ENCODE measurements at regions of chr19 and their contacts with region 1.

Region 1: GRCh38 chr19:572140-572742 is at the start of gene BSG:
- DNase-seq: peak; percentile 95
- H3K4me3 ChIP-seq: peak within 1 kb of the TSS; percentile 91
- H3K27ac ChIP-seq: peak within 1 kb of the TSS; percentile 82
- H3K27me3 ChIP-seq: no peaks in the 10 kb centered on the region
- CTCF ChIP-seq: no peak
- polyA plus RNA-seq, gene BSG: 404 and 515 TPM in 2 replicates

Region 2: DNA sequence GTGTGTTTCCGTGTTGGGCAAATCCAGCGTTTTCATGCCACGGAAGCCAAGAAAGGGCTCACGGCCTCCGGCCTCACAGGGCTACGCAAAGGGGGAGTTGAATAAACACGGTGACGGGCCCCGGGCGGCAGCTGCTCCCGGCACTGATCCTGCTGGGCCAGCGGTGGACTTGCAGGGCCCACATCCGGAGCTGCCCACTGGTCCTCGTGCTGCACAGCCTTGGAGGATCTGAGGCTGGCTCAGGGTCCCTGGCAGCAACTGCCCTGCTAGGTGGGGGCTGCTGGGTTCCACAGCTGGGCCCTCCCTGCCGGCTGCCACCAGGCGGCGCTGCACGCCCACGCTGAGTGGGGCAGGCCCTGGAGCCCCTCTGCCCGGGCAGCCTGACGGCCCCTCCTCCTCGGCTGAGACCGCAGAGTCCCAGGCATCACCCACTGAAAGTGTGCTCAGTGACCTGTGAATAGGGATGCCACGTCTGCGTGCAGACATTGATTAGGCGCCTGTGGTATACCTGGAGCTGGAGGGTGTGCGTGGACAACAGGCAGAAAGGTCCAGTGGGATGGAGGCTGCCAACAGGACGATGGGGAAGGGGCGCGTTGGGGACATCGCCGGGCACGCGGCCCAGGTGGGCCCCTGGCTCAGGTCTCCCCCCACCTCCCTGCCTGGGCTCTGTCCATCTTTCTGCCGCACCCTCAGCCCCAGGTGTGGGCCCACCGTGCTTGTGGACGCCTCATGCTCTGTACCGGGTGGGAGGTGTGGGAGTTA is 12.2 kb after region 1 on chr19:
- CTCF ChIA-PET with region 1: no interaction called
- POLR2A ChIA-PET with region 1: interaction called, 13 read pairs
- DNase-seq: no peak
- H3K4me3 ChIP-seq: no peak overlapping the region
- H3K27ac ChIP-seq: no peak overlapping the region
- H3K27me3 ChIP-seq: peaks cover 4% of the 10 kb centered on the region
- CTCF ChIP-seq: peak; percentile 88

Region 3: GRCh38 chr19:597406-598315 is 25.4 kb after region 1 on chr19:
- CTCF ChIA-PET with region 1: no interaction called
- POLR2A ChIA-PET with region 1: no interaction called
- DNase-seq: no peak
- H3K4me3 ChIP-seq: no peak overlapping the region
- H3K27ac ChIP-seq: no peak overlapping the region
- H3K27me3 ChIP-seq: peaks cover 14% of the 10 kb centered on the region
- CTCF ChIP-seq: no peak

Region 4: GRCh38 chr19:644363-644762 is 72.1 kb after region 1 on chr19:
- CTCF ChIA-PET with region 1: no interaction called
- POLR2A ChIA-PET with region 1: no interaction called
- DNase-seq: no peak
- H3K4me3 ChIP-seq: no peak overlapping the region
- H3K27ac ChIP-seq: no peak overlapping the region
- H3K27me3 ChIP-seq: no peaks in the 10 kb centered on the region
- CTCF ChIP-seq: no peak